H1 (cell line): ENCODE measurements at regions of chrX and their contacts with region 1.

Region 1: GRCh38 chrX:71532753-71533425 is at the start of gene OGT:
- DNase-seq: peak; percentile 80 to 82
- H3K4me3 ChIP-seq: peak within 1 kb of the TSS; percentile 65 to 99 (median 95)
- H3K27ac ChIP-seq: peak within 1 kb of the TSS; percentile 97
- H3K4me1 ChIP-seq: peaks cover 0 to 4% (median 2%) of the 10 kb centered on the region in 4 experiments; a peak in 3 of 7 replicates
- H3K27me3 ChIP-seq: no peaks in the 10 kb centered on the region
- CTCF ChIP-seq: no peak
- EP300 ChIP-seq: 0 out of 3 replicates have a peak, but pooled peaks of 1 of the 2 experiments have one; percentile 18
- POLR2A ChIP-seq: peak; percentile 91 to 96
- RAD21 ChIP-seq: peak; percentile 10 to 15; a peak in 1 of 4 replicates
- total RNA-seq, gene OGT: 114 and 130 TPM in 2 replicates

Region 2: DNA sequence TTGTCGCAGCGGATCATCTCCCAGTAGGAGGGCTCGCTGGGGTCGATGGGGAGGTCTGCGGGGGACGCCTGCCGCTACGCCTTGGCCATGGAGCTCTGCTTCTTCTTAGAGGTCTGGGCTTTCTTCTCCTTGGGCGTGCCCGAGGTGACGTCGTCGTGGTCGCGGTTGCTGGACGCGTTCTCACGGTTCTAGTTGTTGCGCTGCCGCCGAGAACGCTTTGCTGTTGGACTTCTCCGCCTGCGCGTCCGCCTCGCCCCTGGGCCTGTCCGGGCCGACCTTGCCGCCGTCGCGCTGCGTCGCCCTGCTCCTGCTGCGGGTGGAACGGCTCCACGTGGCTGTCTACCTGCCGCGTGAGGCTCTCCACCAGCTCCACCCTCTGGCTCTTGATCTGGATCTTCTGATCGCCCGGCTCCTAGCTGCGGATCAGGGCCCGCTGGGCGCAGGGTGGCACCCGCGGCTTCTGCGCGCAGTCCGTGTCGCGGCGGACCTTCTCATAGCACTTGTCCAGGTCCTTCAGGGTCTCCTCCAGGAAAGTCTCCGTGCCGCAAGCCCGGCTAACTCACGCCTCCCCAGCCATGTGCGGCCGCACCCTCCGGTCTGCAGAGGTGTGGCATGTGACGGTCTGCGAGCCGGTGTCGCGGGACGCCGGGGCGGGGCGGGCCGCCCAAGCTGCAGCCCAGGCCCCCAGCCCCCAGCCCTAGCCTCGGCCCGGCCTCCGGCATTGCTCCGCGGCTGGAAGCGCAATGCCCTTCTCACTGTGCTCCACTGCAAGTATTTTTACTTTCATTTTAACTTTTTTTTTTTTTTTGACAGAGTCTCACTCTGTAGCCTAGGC is 40.4 kb before region 1 on chrX:
- CTCF ChIA-PET with region 1: no interaction called
- POLR2A ChIA-PET with region 1: interaction called, 14 read pairs
- DNase-seq: no peak
- H3K4me3 ChIP-seq: no peak overlapping the region
- H3K27ac ChIP-seq: no peak overlapping the region
- H3K4me1 ChIP-seq: no peaks in the 10 kb centered on the region
- H3K27me3 ChIP-seq: no peaks in the 10 kb centered on the region
- CTCF ChIP-seq: no peak
- EP300 ChIP-seq: no peak
- POLR2A ChIP-seq: no peak
- RAD21 ChIP-seq: no peak

Region 3: GRCh38 chrX:71550578-71550977 is 17.7 kb after region 1 on chrX:
- CTCF ChIA-PET with region 1: interaction called, 3 read pairs
- POLR2A ChIA-PET with region 1: interaction called, 60 read pairs
- DNase-seq: no peak
- H3K4me3 ChIP-seq: no peak overlapping the region
- H3K27ac ChIP-seq: no peak overlapping the region
- H3K4me1 ChIP-seq: no peaks in the 10 kb centered on the region
- H3K27me3 ChIP-seq: no peaks in the 10 kb centered on the region
- CTCF ChIP-seq: no peak
- EP300 ChIP-seq: no peak
- POLR2A ChIP-seq: no peak
- RAD21 ChIP-seq: no peak

Region 4: GRCh38 chrX:71640002-71640401 is 107.1 kb after region 1 on chrX:
- CTCF ChIA-PET with region 1: no interaction called
- POLR2A ChIA-PET with region 1: no interaction called
- DNase-seq: no peak
- H3K4me3 ChIP-seq: no peak overlapping the region
- H3K27ac ChIP-seq: no peak overlapping the region
- H3K4me1 ChIP-seq: no peaks in the 10 kb centered on the region
- H3K27me3 ChIP-seq: no peaks in the 10 kb centered on the region
- CTCF ChIP-seq: no peak
- EP300 ChIP-seq: no peak
- POLR2A ChIP-seq: no peak
- RAD21 ChIP-seq: no peak